Spleen (tissue), 13 donors: ENCODE measurements at regions of chr1 and their contacts with region 1.

Region 1: DNA sequence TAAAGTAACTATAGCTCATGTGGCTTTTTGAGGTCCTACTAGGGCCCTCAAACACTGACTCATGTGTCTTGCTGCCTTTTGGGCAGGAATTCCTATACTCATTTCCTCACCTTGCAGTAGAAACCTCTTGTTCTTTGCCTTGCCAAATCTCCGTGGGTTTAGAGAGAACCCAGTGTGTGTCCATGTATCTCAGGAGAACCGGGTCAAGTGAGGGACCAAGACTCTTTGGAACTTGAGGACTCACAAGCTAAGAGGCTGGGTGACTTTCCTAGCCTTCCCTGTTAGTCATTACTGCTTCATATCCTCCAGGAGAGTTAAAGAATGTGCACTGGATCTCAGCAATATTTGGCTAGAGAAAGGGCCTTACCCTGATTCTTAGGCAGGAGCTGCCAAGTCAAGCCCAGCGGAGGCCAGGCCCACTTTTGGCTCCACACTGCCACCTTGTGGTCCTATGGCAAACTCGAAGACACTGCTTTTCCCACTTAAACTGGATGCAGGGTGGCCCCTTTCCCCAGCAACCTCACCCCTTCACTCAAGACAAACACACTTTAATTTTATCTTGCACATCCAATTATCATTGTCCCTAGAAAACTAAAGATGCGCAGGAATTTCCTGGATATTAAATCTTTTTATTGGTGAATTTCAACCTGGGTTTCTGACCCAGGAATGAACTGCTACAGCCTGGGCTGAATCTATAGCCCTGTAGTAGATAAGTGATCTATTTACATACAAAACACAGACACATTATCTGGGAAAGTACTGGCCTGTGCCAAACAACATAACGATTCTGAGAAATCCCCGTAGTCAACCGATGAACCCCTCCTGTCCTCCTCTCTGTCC is 10.6 kb downstream of the AVPR1B start:
- DNase-seq: peak; percentile 93
- H3K4me3 ChIP-seq: no peak overlapping the region
- H3K27ac ChIP-seq: no peak overlapping the region
- H3K4me1 ChIP-seq: peaks cover 6 to 23% (median 10%) of the 10 kb centered on the region in 6 donors
- H3K27me3 ChIP-seq: no peaks in the 10 kb centered on the region
- CTCF ChIP-seq: peak; percentile 76 to 91 (median 87)
- POLR2A ChIP-seq: no peak

Region 2: DNA sequence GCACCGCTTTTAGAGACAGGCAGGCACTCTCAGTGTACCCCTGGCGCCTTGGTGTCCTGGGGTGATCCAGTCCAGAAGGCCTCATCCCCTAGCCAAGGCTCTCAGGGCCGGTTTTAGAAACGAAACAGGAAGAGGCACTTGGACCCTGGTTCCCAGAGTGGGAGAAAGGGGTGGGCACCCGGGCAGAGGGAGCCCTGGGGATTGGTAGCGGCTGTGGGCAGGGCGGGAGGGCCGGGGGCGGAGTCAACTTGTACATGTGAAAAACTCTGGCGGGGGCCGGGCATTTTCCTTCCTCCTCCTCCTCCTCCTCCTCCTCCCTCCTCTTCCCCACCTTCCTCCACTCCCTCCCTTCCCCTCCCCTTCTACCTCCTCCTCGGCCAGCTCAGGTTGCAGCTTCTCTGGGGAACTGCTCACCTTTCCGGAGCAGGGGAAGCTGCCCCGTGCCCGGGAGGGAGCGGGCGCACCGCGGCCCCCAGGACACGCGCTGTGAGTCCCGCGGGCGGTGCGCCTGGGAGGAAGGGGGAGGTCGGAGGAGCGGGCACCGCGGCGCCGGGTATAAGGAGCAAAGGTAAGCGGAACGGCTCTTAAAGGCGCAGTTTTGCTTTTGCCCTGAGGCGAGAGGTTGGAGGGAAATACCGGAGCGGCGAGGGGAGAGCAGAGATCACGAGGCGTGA is 602.1 kb before region 1 on chr1 and contains the start of gene CDK18:
- intact Hi-C with region 1: no loop called
- DNase-seq: peak; percentile 84
- H3K4me3 ChIP-seq: peak within 1 kb of the TSS; percentile 45 to 83 (median 56)
- H3K27ac ChIP-seq: peak within 1 kb of the TSS in 6 of 8 donors; percentile 47 to 77 (median 70)
- H3K4me1 ChIP-seq: peaks cover 0 to 44% (median 21%) of the 10 kb centered on the region in 6 donors
- H3K27me3 ChIP-seq: peaks cover 0 to 16% (median 0%) of the 10 kb centered on the region in 7 donors
- CTCF ChIP-seq: no peak
- POLR2A ChIP-seq: no peak
- total RNA-seq, gene CDK18: 14.1 to 25.3 (median 22.4) TPM

Region 3: GRCh38 chr1:205983925-205984725 is 122.4 kb before region 1 on chr1:
- intact Hi-C with region 1: loop called (anchors 5 kb)
- DNase-seq: no peak
- H3K4me3 ChIP-seq: no peak overlapping the region
- H3K27ac ChIP-seq: no peak overlapping the region
- H3K4me1 ChIP-seq: no peaks in the 10 kb centered on the region
- H3K27me3 ChIP-seq: no peaks in the 10 kb centered on the region
- CTCF ChIP-seq: peak; percentile 17 to 78 (median 60)
- POLR2A ChIP-seq: no peak

Region 4: GRCh38 chr1:206030714-206031113 is 75.8 kb before region 1 on chr1:
- intact Hi-C with region 1: loop called (anchors 5 kb)
- DNase-seq: peak; percentile 86
- H3K4me3 ChIP-seq: no peak overlapping the region
- H3K27ac ChIP-seq: peak overlapping the region in 1 of 8 donors; percentile 19
- H3K4me1 ChIP-seq: peaks cover 0 to 45% (median 16%) of the 10 kb centered on the region in 6 donors
- H3K27me3 ChIP-seq: peaks cover 0 to 6% (median 0%) of the 10 kb centered on the region in 7 donors
- CTCF ChIP-seq: peak; percentile 57 to 83 (median 75)
- POLR2A ChIP-seq: no peak